Common myeloid progenitor, CD34-positive (primary cell): ENCODE measurements at regions of chr19 and their contacts with region 1.

Region 1: DNA sequence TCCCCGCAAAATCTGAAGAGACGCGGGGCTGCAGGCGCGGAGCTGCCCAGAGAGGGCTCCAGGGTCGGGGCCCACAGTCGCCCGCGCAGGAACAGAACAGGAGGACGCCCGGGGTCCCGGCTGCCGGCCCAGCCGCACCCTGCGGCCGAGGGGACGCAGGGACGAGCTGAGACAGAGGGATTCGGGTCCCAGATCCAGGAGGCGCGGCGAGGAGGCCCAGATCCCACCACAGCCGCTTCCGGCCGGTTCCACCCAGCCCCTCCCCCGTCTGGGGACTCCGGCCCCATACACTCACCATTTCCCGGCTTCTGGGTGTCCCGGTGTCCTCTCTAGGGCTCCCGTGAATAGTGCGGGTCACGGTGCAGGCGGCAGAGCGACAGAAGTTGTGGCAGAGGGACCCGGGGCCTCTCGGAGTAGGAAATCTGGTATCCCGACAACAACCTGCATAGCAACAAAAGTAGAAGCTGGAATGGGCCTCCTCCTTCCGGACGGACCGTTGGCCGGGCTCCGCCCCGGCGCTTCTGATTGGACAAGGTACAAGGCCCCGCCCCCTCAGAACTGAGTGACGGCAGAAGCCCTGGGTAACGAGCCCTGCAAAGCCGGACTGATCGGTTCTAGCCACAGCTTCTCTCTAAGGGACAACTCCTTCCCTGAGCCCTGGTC is at the start of gene ZNF20:
- DNase-seq: peak; percentile 91 to 94 (median 93)
- H3K4me3 ChIP-seq: peak within 1 kb of the TSS; percentile 68 to 95 (median 93)
- H3K27ac ChIP-seq: peak within 1 kb of the TSS; percentile 61 to 84
- H3K4me1 ChIP-seq: peaks cover 11 to 30% (median 15%) of the 10 kb centered on the region in 4 experiments
- H3K27me3 ChIP-seq: no peaks in the 10 kb centered on the region

Region 2: GRCh38 chr19:12092065-12092867 is 47.8 kb before region 1 on chr19:
- CTCF ChIA-PET with region 1: interaction called, 28 read pairs
- POLR2A ChIA-PET with region 1: interaction called, 3 read pairs
- DNase-seq: peak; percentile 90 to 97 (median 96)
- H3K4me3 ChIP-seq: peak overlapping the region; percentile 67 to 92 (median 81)
- H3K27ac ChIP-seq: peak overlapping the region; percentile 77 to 91
- H3K4me1 ChIP-seq: peaks cover 0 to 12% (median 4%) of the 10 kb centered on the region in 4 experiments
- H3K27me3 ChIP-seq: no peaks in the 10 kb centered on the region

Region 3: GRCh38 chr19:12126707-12127106 is 13.3 kb before region 1 on chr19:
- CTCF ChIA-PET with region 1: interaction called, 16 read pairs
- POLR2A ChIA-PET with region 1: no interaction called
- DNase-seq: peak; percentile 22 to 58 (median 51)
- H3K4me3 ChIP-seq: no peak overlapping the region
- H3K27ac ChIP-seq: no peak overlapping the region
- H3K4me1 ChIP-seq: no peaks in the 10 kb centered on the region
- H3K27me3 ChIP-seq: no peaks in the 10 kb centered on the region